HEK293 (cell line): ENCODE measurements at regions of chr2 and their contacts with region 1.

Region 1: DNA sequence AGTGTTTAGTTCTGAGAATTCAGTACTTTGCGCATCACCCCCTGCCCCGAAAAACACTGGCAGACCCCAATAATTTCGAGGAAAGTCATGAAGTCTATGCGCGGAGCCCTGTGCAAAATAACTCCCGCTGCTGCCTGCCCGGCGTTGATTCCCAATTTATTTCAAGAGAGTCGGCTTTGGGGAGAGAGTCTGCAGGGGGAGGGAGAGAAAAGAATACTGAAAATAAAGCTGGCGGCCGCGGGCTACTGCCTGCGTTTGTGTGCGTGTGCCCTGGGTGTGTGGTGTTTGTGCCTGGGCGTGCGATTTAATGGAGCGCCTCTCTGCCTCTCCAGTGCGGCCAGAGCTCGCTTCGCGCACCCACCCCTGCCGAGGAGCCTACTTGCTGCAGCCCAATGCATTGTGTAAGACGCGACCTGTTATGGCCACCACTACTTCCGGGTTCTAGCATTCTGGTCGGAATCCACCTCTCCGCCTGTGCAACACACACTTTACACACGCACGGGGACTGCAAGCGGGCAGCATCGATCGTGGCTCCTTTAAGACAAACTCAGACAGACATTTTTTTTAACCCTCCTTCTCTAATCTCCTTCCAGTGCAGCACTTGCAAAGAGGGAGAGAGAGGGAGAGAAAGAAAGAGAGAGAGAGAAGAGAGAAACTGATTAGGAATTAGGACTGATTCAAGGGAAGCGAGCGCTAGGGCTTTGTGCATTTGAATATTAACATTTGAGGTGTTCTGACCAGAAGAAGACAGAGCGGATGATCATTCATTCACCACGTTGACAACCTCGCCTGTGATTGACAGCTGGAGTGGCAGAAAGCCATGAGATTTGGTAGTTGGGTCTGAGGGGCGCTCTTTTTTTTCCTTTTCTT is at the start of gene MEIS1:
- H3K4me3 ChIP-seq: peak within 1 kb of the TSS; percentile 63
- H3K27ac ChIP-seq: peak within 1 kb of the TSS; percentile 85
- H3K4me1 ChIP-seq: peaks cover 12% of the 10 kb centered on the region; the same call in 1 of the 2 replicates
- CTCF ChIP-seq: 0 out of 2 replicates have a peak, but pooled peaks have one; percentile 27

Region 2: DNA sequence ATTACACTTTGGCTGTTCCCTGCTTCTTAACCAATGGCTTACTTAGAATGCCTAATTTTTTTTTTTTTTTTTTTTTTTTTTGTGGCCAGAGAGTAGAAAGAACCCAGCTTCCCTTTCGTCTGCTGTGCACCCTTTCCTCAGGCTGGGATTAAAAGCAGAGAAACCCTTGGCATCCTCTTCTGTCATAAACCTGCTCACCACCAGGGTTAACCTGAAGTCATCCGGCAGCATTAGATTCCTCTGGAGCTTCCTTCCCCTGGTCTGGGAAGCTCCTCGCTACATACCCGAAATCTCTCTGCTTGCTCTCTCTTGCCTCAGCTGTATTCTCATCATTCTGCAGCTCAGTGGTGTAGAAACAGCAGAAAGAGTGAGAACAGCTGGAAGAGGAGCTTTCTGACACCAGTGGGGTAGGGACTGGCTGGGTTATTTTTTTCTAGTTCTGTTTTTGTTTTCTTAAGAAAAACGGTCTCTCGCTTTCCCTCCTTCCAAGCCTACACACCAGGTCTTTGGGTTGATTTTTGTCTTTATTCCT is 339.0 kb before region 1 on chr2:
- CTCF ChIA-PET with region 1: no interaction called
- POLR2A ChIA-PET with region 1: no interaction called
- H3K4me3 ChIP-seq: no peak overlapping the region
- H3K27ac ChIP-seq: no peak overlapping the region
- H3K4me1 ChIP-seq: no peaks in the 10 kb centered on the region
- CTCF ChIP-seq: no peak

Region 3: GRCh38 chr2:66270247-66270646 is 164.7 kb before region 1 on chr2:
- CTCF ChIA-PET with region 1: no interaction called
- POLR2A ChIA-PET with region 1: no interaction called
- H3K4me3 ChIP-seq: no peak overlapping the region
- H3K27ac ChIP-seq: no peak overlapping the region
- H3K4me1 ChIP-seq: no peaks in the 10 kb centered on the region
- CTCF ChIP-seq: no peak

Region 4: DNA sequence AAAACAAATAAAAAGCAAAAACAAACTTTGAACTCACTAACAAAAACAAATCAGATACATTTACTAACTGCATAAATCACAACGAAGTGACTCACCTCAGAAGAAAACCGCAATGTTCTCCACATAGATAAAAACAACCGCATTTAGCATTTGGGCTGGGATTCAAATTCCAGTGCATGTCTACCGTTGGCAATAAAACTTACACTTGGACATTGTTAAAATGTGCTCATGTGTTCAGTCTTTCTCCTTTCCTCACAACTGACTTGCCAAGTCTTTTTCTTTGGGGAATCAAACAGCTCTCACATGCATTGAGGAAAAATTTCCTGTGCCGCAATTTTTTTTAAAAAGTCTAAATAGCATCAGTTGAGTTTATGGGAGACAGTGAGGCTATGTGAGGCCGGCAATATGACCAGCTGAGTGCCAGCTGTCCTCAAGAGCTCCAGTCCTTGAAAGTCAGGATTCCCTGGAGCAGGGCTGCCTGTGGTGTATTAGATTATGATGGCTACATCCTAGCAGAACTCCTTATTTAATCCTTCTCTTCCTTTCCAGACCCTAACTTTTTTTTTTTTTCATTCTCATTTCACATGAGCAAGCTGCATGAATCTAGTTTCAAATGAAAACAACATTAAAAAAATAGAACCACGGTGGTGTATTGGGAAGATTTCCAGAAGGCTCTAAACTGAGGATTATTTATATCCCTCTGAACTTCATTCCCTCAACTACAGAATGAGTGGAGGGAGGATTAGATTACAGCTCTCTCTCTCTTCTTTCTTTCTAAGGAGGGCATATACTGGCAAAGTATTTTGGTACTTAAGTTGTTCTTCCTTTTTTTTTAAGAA is 70.2 kb before region 1 on chr2:
- CTCF ChIA-PET with region 1: interaction called, 4 read pairs
- POLR2A ChIA-PET with region 1: interaction called, 10 read pairs
- H3K4me3 ChIP-seq: no peak overlapping the region
- H3K27ac ChIP-seq: peak overlapping the region; percentile 55
- H3K4me1 ChIP-seq: peaks cover 31% of the 10 kb centered on the region
- CTCF ChIP-seq: no peak

Region 5: DNA sequence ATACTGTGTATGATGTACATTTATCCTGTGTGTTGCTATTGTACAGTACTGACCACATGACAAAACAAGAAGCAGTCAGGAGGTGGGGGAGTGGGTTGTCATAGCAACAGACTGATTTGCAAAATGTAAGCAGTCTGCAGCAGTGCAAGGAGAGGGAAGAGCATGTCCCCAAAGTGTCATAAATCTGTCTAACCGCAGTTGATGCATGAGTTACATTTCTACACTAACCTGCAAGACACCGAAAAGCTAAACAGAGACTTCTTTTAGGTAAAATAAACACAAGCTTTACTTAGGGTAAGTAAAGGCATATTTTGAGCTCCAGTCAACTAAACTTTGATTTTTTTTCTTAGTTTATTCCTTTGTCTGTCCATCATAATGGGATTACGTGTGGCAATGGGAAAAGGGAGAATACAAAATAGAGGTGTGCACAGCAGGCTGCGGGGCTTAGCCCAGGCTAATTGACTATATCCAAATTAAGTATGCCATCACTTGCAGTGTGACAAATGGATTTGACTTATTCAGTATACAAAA is 134.5 kb after region 1 on chr2:
- CTCF ChIA-PET with region 1: interaction called, 17 read pairs
- POLR2A ChIA-PET with region 1: interaction called, 11 read pairs
- H3K4me3 ChIP-seq: no peak overlapping the region
- H3K27ac ChIP-seq: peak overlapping the region; percentile 21; the same call in 1 of the 2 replicates
- H3K4me1 ChIP-seq: peaks cover 30% of the 10 kb centered on the region
- CTCF ChIP-seq: no peak

Region 6: DNA sequence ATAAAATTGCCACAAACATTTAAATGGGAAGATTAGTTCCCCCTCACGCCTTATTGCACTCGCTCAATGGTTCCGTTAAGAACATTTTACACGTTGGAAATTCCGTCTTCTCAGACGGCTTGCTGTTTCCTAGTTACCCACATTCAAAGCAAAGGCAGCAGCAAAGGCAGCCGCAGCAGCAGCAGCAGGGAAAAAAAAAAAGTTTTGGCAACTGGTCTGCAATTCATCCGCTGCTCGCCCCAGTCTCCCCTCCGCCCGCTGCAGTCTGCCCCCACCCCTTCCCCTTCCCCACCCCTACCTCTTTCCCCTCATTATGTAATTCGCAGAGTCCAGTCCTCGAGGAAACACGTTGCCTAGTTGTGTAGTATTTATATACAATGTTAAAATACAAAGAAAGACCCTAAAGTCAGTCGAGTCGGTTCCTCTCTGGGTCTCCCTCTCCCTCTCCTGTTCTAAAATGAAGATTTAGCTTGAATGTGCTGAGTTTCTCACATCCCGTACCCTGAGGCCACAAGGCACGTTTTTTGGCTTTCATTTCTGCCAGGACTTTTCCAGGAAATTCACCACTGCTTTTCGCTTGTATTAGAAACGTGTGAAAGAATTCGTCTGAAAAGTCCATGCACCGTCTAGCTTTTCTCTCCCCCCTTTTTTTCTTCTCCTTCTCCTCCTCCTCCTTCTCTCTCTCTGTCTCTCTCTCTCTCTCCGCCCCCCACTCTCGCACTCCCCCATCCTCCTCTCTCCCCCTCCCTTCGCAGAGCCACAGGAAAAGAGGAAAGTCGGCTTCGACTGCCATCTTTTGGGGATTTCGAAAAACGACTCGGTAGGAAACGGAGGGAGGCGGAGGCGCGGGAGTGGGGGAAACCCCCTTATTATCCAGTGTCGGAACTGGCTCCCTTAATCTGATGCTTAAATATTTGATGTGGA is 140.0 kb after region 1 on chr2:
- CTCF ChIA-PET with region 1: interaction called, 17 read pairs
- POLR2A ChIA-PET with region 1: interaction called, 11 read pairs
- H3K4me3 ChIP-seq: peak overlapping the region; percentile 53
- H3K27ac ChIP-seq: peak overlapping the region; percentile 80
- H3K4me1 ChIP-seq: peaks cover 10% of the 10 kb centered on the region; the same call in 1 of the 2 replicates
- CTCF ChIP-seq: peak; percentile 92